Panc1 (cell line): ENCODE measurements at regions of chr1 and their contacts with region 1.

Region 1: DNA sequence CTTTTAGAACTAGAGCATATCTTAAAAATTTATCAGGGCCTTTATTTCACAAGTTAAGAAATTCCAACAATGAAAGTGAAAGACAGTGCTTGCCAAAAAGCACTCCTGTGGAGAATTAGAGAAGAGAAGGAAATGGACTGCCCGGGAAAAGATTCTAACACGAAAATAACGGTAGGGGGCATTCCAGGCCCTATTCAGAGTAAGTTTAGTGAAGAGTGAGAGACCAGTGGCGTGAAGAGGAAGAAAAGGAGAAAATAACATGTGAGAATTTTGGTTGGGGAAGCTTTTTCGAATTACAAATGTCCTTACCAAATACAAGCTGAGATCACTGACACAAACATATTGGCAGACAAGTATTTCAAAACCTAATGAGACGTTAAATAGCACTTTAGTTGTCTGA is 38.4 kb upstream of the RBM34 start:
- DNase-seq: no peak
- ATAC-seq: no peak
- H3K4me3 ChIP-seq: no peak overlapping the region
- H3K27ac ChIP-seq: no peak overlapping the region
- H3K4me1 ChIP-seq: no peaks in the 10 kb centered on the region
- H3K27me3 ChIP-seq: no peaks in the 10 kb centered on the region
- CTCF ChIP-seq: no peak

Region 2: GRCh38 chr1:235160957-235161684 is 38.3 kb before region 1 on chr1 and contains the start of gene RBM34:
- CTCF ChIA-PET with region 1: no interaction called
- POLR2A ChIA-PET with region 1: interaction called, 10 read pairs
- in situ Hi-C with region 1: no loop called
- intact Hi-C with region 1: no loop called
- DNase-seq: peak; percentile 67
- ATAC-seq: peak; percentile 98
- H3K4me3 ChIP-seq: peak within 1 kb of the TSS; percentile 83 to 98
- H3K27ac ChIP-seq: peak within 1 kb of the TSS; percentile 97
- H3K4me1 ChIP-seq: peaks cover 7% of the 10 kb centered on the region
- H3K27me3 ChIP-seq: no peaks in the 10 kb centered on the region
- CTCF ChIP-seq: no peak
- total RNA-seq, gene RBM34: 104 TPM

Region 3: DNA sequence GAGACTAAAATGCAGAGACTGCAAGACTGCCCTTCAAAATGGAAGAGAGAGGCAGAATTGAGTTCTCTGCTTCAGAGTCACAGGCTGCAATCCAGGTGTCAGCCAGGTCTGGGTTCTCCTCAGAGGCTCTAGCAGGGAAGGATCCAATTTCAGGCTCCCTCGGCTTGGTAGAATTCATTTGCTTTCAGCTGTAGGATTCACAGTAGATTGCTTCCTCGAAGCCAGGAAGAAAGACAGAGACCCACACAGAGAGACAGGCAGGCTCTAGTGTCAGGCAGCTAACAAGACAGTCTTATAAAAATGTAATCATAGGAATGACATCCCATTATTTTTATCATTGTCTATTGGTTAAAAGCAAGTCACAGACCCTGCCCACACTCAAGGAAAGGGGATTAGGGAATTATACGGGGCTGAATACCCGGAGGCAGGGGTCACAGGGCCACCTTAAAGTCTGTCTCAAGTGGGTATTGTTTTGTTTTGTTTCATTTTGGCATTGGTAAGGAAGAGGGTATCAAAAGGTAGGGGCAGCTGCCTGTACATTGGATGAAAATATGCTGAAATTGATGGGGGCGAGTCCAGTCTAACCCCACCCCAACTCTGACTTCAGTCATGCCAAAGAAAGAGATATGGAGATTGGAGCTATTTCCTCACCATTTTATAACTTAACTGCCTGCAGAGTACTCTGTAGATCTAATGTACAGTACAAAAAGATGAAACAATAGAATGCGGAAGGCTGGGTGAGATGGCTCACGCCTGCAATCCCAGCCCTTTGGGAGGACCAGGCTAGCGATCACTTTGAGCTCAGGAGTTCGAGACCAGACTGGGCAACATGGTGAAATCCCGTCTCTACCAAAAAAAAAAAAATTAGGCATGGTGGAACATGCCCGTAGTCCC is 158.3 kb after region 1 on chr1:
- CTCF ChIA-PET with region 1: no interaction called
- POLR2A ChIA-PET with region 1: no interaction called
- in situ Hi-C with region 1: no loop called
- intact Hi-C with region 1: no loop called
- DNase-seq: no peak
- ATAC-seq: peak; percentile 33; the same call in 1 of the 2 replicates
- H3K4me3 ChIP-seq: no peak overlapping the region
- H3K27ac ChIP-seq: peak overlapping the region; percentile 36; the same call in 1 of the 2 replicates
- H3K4me1 ChIP-seq: peaks cover 4% of the 10 kb centered on the region; the same call in 1 of the 2 replicates
- H3K27me3 ChIP-seq: no peaks in the 10 kb centered on the region
- CTCF ChIP-seq: no peak